ENCODE measurements at regions of chr9 and their contacts with region 1.

Region 1: DNA sequence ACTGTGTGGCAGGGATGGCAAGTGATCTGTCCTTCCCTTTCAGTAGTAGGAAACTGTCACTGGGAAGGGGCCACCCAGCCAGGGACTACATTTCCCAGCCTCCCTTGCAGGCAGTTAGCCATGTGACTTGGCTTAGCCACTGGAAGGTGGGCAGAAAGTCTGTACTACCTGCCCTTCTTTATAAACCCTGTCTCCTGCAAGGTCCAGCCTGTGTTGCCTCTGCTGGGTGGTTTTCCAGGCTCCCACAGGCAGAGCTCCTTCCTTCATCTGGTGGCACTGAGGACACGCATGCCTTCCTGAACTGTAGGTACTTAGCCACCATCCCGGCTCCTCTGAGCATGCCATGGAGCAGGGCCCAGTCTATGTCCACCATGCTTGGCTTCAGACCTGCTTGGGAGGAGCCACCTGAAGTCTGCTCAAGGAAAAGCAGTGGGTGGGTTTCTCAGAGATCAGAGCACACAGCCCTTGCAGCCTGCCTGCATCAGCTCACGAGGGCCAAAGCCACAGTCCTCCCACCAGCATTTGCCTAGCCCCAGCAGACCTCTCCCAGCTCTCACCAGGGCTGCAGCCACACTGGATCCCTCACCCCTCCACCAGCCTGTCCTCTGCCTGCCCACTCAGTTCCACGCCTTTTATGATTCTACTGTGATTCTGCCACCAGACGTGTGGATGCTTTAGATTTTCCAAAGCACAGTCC is 16.7 kb upstream of the SLC25A51 start:
- DNase-seq: no peak

Region 2: DNA sequence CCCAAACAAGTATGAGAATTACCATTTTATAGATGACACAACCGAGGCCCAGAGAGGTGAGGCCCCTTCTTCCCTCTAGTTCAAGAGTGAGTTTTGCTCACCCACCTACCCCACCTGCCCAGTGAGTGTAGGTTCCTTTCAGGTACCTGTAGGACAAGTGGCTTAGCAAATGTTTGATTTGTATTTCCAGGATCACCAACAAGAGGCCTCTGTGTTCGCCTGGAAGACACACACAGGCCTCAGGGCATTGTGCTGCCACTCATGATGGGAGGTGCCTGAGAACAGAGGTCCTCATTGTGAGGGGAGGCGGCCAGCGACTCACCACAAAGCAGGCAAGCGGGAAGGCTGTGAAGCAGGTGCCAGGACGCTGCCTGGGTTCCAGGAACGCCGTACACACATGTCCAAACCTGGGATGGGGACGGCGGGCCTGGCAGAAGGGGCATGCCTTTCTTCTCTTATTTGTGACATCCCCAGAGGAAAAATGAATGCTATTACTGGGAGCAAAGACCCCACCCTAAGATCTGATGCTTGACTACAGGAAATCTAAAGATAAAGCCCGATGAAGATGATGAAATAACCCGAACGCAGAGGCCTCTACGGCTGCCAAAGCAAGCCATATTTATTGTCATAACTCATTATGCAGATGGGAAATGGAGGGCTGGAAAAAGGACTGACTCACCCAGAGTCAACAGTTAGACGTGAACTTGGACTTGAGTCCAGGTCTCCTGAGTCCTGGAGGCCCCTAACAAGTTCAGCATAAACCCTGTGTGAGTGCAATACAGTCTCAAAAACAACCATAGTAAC is 43.5 kb after region 1 on chr9:
- in situ Hi-C with region 1: loop called (anchors 5 kb)
- DNase-seq: no peak

Measured in KBM-7 (cell line).